ENCODE measurements at regions of chr3 and their contacts with region 1.

Region 1: GRCh38 chr3:105366326-105367062 is at the start of gene ALCAM:
- DNase-seq: peak; percentile 92
- ATAC-seq: peak; percentile 64
- H3K4me3 Mint-ChIP-seq: peak within 1 kb of the TSS; percentile 94
- H3K27ac Mint-ChIP-seq: peak within 1 kb of the TSS; percentile 99
- H3K4me1 Mint-ChIP-seq: peaks cover 43% of the 10 kb centered on the region
- H3K27me3 Mint-ChIP-seq: peaks cover 23% of the 10 kb centered on the region
- total RNA-seq, gene ALCAM: 22.0 TPM

Region 2: GRCh38 chr3:104564045-104564643 is 802.4 kb before region 1 on chr3:
- CTCF ChIA-PET with region 1: no interaction called
- POLR2A ChIA-PET with region 1: no interaction called
- intact Hi-C with region 1: loop called (anchors 1 to 5 kb)
- DNase-seq: peak; percentile 77
- ATAC-seq: no peak
- H3K4me3 Mint-ChIP-seq: no peak overlapping the region
- H3K27ac Mint-ChIP-seq: no peak overlapping the region
- H3K4me1 Mint-ChIP-seq: peaks cover 2% of the 10 kb centered on the region
- H3K27me3 Mint-ChIP-seq: no peaks in the 10 kb centered on the region

Region 3: GRCh38 chr3:105518806-105519418 is 152.4 kb after region 1 on chr3:
- CTCF ChIA-PET with region 1: no interaction called
- POLR2A ChIA-PET with region 1: no interaction called
- intact Hi-C with region 1: loop called (anchors 2 kb)
- DNase-seq: peak; percentile 21
- ATAC-seq: peak; percentile 57
- H3K4me3 Mint-ChIP-seq: no peak overlapping the region
- H3K27ac Mint-ChIP-seq: no peak overlapping the region
- H3K4me1 Mint-ChIP-seq: peaks cover 3% of the 10 kb centered on the region
- H3K27me3 Mint-ChIP-seq: peaks cover 2% of the 10 kb centered on the region

Region 4: GRCh38 chr3:105564546-105565288 is 198.2 kb after region 1 on chr3:
- CTCF ChIA-PET with region 1: no interaction called
- POLR2A ChIA-PET with region 1: no interaction called
- intact Hi-C with region 1: no loop called
- DNase-seq: no peak
- ATAC-seq: no peak
- H3K4me3 Mint-ChIP-seq: no peak overlapping the region
- H3K27ac Mint-ChIP-seq: no peak overlapping the region
- H3K4me1 Mint-ChIP-seq: no peaks in the 10 kb centered on the region
- H3K27me3 Mint-ChIP-seq: no peaks in the 10 kb centered on the region

Region 5: GRCh38 chr3:105827959-105828358 is 461.5 kb after region 1 on chr3:
- CTCF ChIA-PET with region 1: no interaction called
- POLR2A ChIA-PET with region 1: interaction called, 3 read pairs
- intact Hi-C with region 1: loop called in 1 of 2 experiments (anchors 2 kb)
- DNase-seq: peak; percentile 36
- ATAC-seq: no peak
- H3K4me3 Mint-ChIP-seq: peak overlapping the region; percentile 57
- H3K27ac Mint-ChIP-seq: peak overlapping the region; percentile 100
- H3K4me1 Mint-ChIP-seq: peaks cover 88% of the 10 kb centered on the region
- H3K27me3 Mint-ChIP-seq: no peaks in the 10 kb centered on the region

Region 6: DNA sequence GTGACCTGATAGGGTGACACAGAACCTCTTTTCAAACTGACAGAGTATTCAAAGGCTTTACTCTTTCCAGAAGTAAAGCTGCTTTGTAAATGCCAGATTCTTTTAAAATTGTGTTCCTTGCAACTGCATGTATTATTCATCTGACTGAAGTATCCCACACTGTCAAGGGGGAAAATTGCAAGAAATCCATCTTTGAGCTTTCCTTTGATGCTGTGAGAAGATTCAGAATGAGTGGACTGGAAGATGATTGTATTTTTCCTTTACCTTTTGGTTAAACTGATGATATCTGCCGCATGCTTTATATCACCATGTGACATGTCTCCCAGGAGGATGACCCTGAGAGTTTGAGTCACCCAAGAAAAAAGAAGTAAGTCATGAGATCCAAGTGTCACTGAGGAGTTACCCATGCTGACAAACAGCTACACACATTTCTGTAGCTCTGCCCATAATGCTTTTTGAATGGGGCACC is 753.2 kb after region 1 on chr3:
- CTCF ChIA-PET with region 1: interaction called, 3 read pairs
- POLR2A ChIA-PET with region 1: no interaction called
- intact Hi-C with region 1: loop called in 1 of 2 experiments (anchors 5 kb)
- DNase-seq: peak; percentile 28
- ATAC-seq: peak; percentile 99
- H3K4me3 Mint-ChIP-seq: no peak overlapping the region
- H3K27ac Mint-ChIP-seq: peak overlapping the region; percentile 83
- H3K4me1 Mint-ChIP-seq: peaks cover 26% of the 10 kb centered on the region
- H3K27me3 Mint-ChIP-seq: no peaks in the 10 kb centered on the region

Region 7: DNA sequence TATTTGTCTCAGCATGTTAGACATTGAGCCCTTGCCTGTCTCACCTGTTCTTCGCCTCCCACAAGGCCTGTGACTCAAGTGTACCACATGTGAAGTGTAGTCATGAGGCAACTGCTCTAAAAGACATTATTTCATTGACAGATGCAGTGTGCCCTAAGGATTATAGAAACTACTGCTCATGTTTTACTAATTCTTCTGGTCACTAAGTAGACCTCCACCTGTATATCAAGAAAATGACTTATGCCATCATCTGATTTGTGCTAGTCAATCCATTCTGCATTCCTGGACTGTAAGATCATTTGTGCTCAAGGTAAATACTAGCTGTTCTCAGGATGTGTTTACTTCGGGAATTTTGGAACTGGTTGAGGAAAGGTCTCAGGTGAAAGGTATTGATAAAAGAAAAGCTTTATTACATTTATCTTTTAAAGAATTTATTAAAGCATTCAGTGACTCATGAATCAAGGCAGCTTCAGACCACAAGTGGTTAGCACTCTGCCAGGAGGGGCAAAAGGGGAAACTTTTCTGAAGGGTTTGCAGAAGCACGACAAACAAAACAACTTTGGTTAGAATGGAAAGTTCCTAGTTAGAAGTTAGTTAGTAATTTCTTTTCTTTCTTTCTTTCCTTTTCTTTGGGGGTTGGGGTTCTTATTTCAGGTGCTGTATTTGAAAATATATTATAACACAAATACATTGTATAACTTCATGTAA is 967.6 kb after region 1 on chr3:
- CTCF ChIA-PET with region 1: no interaction called
- POLR2A ChIA-PET with region 1: interaction called, 6 read pairs
- intact Hi-C with region 1: loop called (anchors 2 to 5 kb)
- DNase-seq: peak; percentile 84
- ATAC-seq: peak; percentile 70
- H3K4me3 Mint-ChIP-seq: peak overlapping the region; percentile 67
- H3K27ac Mint-ChIP-seq: peak overlapping the region; percentile 97
- H3K4me1 Mint-ChIP-seq: peaks cover 89% of the 10 kb centered on the region
- H3K27me3 Mint-ChIP-seq: no peaks in the 10 kb centered on the region

Region 8: GRCh38 chr3:106609666-106610301 is 1243.3 kb after region 1 on chr3:
- CTCF ChIA-PET with region 1: no interaction called
- POLR2A ChIA-PET with region 1: no interaction called
- intact Hi-C with region 1: loop called (anchors 5 kb)
- DNase-seq: peak; percentile 78
- ATAC-seq: peak; percentile 81
- H3K4me3 Mint-ChIP-seq: no peak overlapping the region
- H3K27ac Mint-ChIP-seq: peak overlapping the region; percentile 81
- H3K4me1 Mint-ChIP-seq: peaks cover 29% of the 10 kb centered on the region
- H3K27me3 Mint-ChIP-seq: peaks cover 4% of the 10 kb centered on the region